ENCODE measurements at regions of chr12 and their contacts with region 1.

Region 1: DNA sequence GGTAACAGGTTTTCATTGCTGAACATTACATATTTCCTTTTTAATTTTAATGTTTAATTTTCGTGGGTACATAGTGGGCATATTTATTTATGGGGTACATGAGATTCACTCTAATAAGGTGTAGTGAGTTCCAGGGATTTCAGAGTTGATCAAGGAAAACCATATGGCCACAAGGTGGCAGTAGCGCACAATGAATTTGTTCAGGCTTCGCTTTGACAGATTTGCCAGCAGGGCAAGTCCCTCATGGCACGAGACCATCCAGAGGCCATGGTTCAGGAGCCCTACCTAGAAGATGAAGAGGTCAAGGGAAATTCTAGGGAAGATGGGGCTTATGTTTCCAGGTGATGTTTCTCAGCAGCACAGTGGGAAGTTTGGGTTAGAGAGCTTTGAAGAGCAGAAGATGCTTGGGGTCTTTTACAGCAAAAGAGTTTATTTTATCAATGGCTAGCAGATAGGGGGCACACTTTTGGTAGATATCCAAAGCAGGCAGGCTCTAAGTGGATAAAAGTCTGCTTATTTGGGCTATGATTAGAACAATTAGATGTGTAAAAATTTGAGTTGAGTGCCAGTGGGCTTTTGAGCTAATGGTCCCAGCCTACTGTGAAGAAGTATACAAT is 1004.4 kb downstream of the AACS start:
- DNase-seq: peak; percentile 22 to 72 (median 42)
- ATAC-seq: peak; percentile 78
- H3K4me3 ChIP-seq: no peak overlapping the region
- H3K27ac ChIP-seq: no peak overlapping the region
- H3K4me1 ChIP-seq: no peaks in the 10 kb centered on the region
- H3K27me3 ChIP-seq: no peaks in the 10 kb centered on the region
- CTCF ChIP-seq: peak; percentile 63 to 67 (median 66)
- EP300 ChIP-seq: no peak
- POLR2A ChIP-seq: no peak
- RAD21 ChIP-seq: peak; percentile 45 to 84; a peak in 2 of 4 replicates

Region 2: DNA sequence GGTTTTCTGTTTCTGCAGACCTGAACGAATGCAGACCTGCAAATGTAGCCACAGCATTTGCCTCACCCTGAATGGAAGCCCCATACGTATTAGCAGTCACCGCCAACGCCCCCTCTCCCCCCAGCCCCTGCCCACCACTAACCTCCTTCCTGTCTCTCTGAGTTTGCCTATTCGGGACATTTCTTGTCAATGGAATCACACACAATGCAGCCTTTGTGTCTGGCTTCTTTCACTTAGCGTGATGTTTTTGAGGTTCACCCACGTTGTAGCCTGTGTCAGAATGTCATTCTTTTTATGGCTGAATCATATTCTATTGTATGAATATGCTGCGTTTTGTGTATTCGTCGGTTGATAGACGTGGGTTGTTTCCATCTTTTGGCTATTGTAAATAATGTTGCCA is 825.8 kb before region 1 on chr12:
- CTCF ChIA-PET with region 1: no interaction called
- POLR2A ChIA-PET with region 1: no interaction called
- in situ Hi-C with region 1: no loop called
- intact Hi-C with region 1: no loop called
- DNase-seq: no peak
- ATAC-seq: no peak
- H3K4me3 ChIP-seq: no peak overlapping the region
- H3K27ac ChIP-seq: no peak overlapping the region
- H3K4me1 ChIP-seq: no peaks in the 10 kb centered on the region
- H3K27me3 ChIP-seq: peaks cover 16 to 57% of the 10 kb centered on the region in 2 experiments; a peak in 4 of 5 replicates
- CTCF ChIP-seq: no peak
- EP300 ChIP-seq: no peak
- POLR2A ChIP-seq: no peak
- RAD21 ChIP-seq: no peak

Region 3: DNA sequence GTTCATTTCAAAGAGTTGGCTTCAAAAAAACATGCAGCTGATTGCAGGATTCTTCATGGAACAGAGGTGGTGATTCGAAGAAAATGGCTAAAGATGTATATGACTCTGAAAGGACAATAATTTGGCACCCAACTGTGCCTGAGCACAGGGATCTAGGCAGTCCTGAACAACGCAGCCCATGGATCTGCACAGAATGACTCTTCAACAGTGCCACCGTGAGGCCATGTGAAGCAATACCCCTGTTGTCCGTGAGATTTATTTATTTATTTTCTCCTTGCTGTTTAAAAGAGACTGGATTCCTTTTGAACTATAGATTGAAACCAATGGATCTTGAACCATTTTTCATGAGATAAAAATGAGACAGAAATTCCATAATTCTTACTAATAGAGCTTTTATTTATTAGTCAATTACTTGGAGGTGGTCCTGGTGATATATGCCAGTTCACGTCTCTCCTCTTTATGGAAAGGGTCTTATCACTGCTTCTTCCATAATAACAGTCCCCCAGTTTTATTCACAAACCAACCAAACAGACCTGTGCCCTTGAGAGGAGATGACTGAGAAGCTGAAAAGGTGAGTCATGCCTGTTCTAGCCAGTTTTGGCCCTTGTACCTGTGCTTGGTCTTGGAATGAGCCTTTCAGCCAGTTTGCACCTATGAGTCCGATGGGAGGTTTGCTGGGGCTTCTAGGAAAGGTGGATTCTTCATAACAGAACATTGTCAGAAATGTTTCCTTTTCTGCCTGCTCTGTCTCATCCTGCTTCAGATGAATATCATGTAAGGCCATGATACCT is 593.8 kb after region 1 on chr12:
- CTCF ChIA-PET with region 1: no interaction called
- POLR2A ChIA-PET with region 1: no interaction called
- in situ Hi-C with region 1: no loop called
- intact Hi-C with region 1: loop called (anchors 5 kb)
- DNase-seq: peak; percentile 32 to 53 (median 42)
- ATAC-seq: peak; percentile 82
- H3K4me3 ChIP-seq: no peak overlapping the region
- H3K27ac ChIP-seq: no peak overlapping the region
- H3K4me1 ChIP-seq: no peaks in the 10 kb centered on the region
- H3K27me3 ChIP-seq: no peaks in the 10 kb centered on the region
- CTCF ChIP-seq: peak; percentile 38 to 67 (median 53)
- EP300 ChIP-seq: no peak
- POLR2A ChIP-seq: no peak
- RAD21 ChIP-seq: peak; percentile 11 to 59; a peak in 2 of 4 replicates

Region 4: GRCh38 chr12:126747530-126748149 is 678.0 kb after region 1 on chr12:
- CTCF ChIA-PET with region 1: no interaction called
- POLR2A ChIA-PET with region 1: no interaction called
- in situ Hi-C with region 1: no loop called
- intact Hi-C with region 1: loop called (anchors 5 kb)
- DNase-seq: peak; percentile 67 to 83 (median 82)
- ATAC-seq: peak; percentile 94
- H3K4me3 ChIP-seq: no peak overlapping the region
- H3K27ac ChIP-seq: no peak overlapping the region
- H3K4me1 ChIP-seq: no peaks in the 10 kb centered on the region
- H3K27me3 ChIP-seq: no peaks in the 10 kb centered on the region
- CTCF ChIP-seq: peak; percentile 72 to 93 (median 79)
- EP300 ChIP-seq: no peak
- POLR2A ChIP-seq: no peak
- RAD21 ChIP-seq: peak; percentile 29 to 61; a peak in 3 of 4 replicates

Region 5: GRCh38 chr12:126874427-126875026 is 804.9 kb after region 1 on chr12:
- CTCF ChIA-PET with region 1: no interaction called
- POLR2A ChIA-PET with region 1: no interaction called
- in situ Hi-C with region 1: no loop called
- intact Hi-C with region 1: loop called (anchors 1 kb)
- DNase-seq: peak; percentile 76 to 87 (median 79)
- ATAC-seq: peak; percentile 96
- H3K4me3 ChIP-seq: no peak overlapping the region
- H3K27ac ChIP-seq: no peak overlapping the region
- H3K4me1 ChIP-seq: peaks cover 12 to 15% of the 10 kb centered on the region in 2 experiments; a peak in 4 of 5 replicates
- H3K27me3 ChIP-seq: no peaks in the 10 kb centered on the region
- CTCF ChIP-seq: peak; percentile 93 to 99 (median 94)
- EP300 ChIP-seq: no peak
- POLR2A ChIP-seq: no peak
- RAD21 ChIP-seq: peak; percentile 69 to 93

Region 6: GRCh38 chr12:127381048-127381668 is 1311.5 kb after region 1 on chr12:
- CTCF ChIA-PET with region 1: interaction called, 3 read pairs
- POLR2A ChIA-PET with region 1: no interaction called
- in situ Hi-C with region 1: loop called (anchors 25 kb)
- intact Hi-C with region 1: loop called (anchors 5 kb)
- DNase-seq: peak; percentile 70 to 85 (median 82)
- ATAC-seq: peak; percentile 100
- H3K4me3 ChIP-seq: no peak overlapping the region
- H3K27ac ChIP-seq: no peak overlapping the region
- H3K4me1 ChIP-seq: peaks cover 0 to 4% of the 10 kb centered on the region in 2 experiments; a peak in 1 of 5 replicates
- H3K27me3 ChIP-seq: peaks cover 0 to 5% of the 10 kb centered on the region in 2 experiments; a peak in 1 of 5 replicates
- CTCF ChIP-seq: peak; percentile 88 to 91 (median 90)
- EP300 ChIP-seq: no peak
- POLR2A ChIP-seq: no peak
- RAD21 ChIP-seq: peak; percentile 76 to 93

Measured in K562 (cell line).